ENCODE measurements at regions of chr12 and their contacts with region 1.

Region 1: GRCh38 chr12:810671-811415 is 58.5 kb downstream of the WNK1 start:
- DNase-seq: no peak
- H3K4me3 ChIP-seq: peak overlapping the region in 1 of 2 donors; percentile 9
- H3K4me3 Mint-ChIP-seq: peak overlapping the region in 7 of 8 donors; percentile 21 to 76 (median 62)
- H3K27ac ChIP-seq: peak overlapping the region; percentile 11
- H3K27ac Mint-ChIP-seq: peak overlapping the region; percentile 14 to 86 (median 78)
- H3K4me1 ChIP-seq: peaks cover 86% of the 10 kb centered on the region
- H3K4me1 Mint-ChIP-seq: peaks cover 50 to 81% (median 66%) of the 10 kb centered on the region in 4 donors
- H3K27me3 ChIP-seq: no peaks in the 10 kb centered on the region
- H3K27me3 Mint-ChIP-seq: no peaks in the 10 kb centered on the region

Region 2: DNA sequence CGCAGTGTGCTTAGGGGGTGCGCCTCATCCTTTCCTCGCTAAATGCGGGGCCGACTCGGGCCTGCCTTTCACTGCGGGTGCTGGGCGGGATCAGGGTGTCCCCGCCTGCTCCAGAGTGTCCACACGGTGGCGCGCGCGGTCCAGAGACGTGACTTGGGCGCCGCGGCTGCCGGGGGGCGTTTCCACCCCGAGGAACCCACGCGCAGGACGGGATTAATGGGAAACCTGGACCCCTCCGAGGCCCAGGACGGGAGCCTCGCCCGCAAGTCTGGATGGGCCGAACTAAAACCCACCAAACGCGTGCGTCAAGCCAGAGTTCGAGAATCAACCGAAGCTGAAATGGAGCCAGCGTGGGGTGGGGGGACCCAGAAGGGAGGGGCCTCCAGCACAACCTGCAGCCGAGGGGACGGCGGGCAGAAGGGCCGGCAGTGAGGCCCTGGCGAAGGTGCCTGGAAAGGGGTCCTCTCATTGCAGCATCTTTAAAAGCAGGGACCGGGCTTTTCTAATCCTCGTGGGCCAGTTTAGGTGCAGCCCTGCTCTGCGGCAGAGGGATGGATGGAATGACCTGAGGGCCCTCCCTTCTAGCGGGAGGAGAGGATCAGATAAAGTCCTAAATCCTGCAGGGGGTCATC is 240.9 kb before region 1 on chr12:
- CTCF ChIA-PET with region 1: interaction called, 219 read pairs
- POLR2A ChIA-PET with region 1: interaction called, 13 read pairs
- intact Hi-C with region 1: loop called (anchors 2 kb)
- DNase-seq: peak; percentile 79 to 84 (median 82)
- H3K4me3 ChIP-seq: peak overlapping the region; percentile 52 to 65
- H3K4me3 Mint-ChIP-seq: peak overlapping the region; percentile 78 to 90 (median 86)
- H3K27ac ChIP-seq: peak overlapping the region; percentile 47
- H3K27ac Mint-ChIP-seq: peak overlapping the region in 6 of 7 donors; percentile 64 to 88 (median 80)
- H3K4me1 ChIP-seq: peaks cover 43% of the 10 kb centered on the region
- H3K4me1 Mint-ChIP-seq: peaks cover 35 to 54% (median 42%) of the 10 kb centered on the region in 4 donors
- H3K27me3 ChIP-seq: no peaks in the 10 kb centered on the region
- H3K27me3 Mint-ChIP-seq: no peaks in the 10 kb centered on the region

Region 3: DNA sequence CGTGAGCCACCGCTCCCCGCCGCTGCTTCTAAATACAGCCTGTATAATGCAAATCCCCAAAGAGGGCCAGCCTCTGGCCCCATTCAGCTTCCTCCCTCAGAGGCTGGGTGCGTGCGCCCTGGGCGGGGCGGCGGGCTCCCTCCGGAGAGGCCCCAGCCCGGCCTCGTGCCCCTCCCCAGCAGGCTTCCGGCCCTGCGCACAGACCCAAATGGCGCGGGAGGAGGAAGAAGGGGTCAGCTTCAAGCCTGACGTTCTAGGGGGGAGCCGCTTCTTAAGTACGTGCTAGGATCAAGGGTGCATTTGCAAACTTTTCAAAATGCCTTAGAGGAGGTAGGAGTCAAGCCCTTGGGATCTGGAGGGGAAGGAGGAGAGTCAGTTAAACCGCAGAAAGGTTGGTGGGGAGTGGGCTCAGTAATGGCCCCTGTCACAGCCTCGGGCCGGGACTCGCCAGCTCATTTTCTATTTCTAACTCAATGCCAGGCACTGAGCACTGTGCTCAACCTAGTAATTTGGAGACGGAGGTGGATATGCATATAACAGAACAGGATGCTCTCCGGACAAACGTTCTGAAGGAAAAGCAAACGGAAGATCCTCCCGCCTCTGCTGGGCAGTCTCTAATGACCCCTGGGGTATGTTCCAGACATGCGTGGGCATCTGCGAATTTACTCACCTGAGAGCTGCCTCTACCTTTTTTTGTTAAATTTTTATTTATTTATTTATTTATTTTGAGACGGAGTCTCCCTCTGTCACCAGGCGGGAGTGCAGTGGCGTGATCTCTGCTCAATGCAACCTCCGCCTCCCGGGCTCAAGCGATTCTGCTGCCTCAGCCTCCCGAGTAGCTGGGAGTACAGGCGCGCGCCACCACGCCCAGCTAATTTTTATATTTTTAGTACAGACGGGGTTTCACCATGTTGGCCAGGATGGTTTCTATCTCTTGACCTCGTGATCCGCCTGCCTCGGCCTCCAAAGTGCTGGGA is 179.9 kb before region 1 on chr12:
- CTCF ChIA-PET with region 1: interaction called, 14 read pairs
- POLR2A ChIA-PET with region 1: interaction called, 4 read pairs
- intact Hi-C with region 1: no loop called
- DNase-seq: peak in 3 of 5 donors; percentile 66 to 81 (median 68)
- H3K4me3 ChIP-seq: peak overlapping the region in 1 of 2 donors; percentile 68
- H3K4me3 Mint-ChIP-seq: peak overlapping the region in 6 of 8 donors; percentile 92 to 98 (median 93)
- H3K27ac ChIP-seq: peak overlapping the region; percentile 76
- H3K27ac Mint-ChIP-seq: peak overlapping the region in 5 of 7 donors; percentile 86 to 99 (median 95)
- H3K4me1 ChIP-seq: peaks cover 15% of the 10 kb centered on the region
- H3K4me1 Mint-ChIP-seq: peaks cover 4 to 28% (median 18%) of the 10 kb centered on the region in 4 donors
- H3K27me3 ChIP-seq: no peaks in the 10 kb centered on the region
- H3K27me3 Mint-ChIP-seq: no peaks in the 10 kb centered on the region

Region 4: GRCh38 chr12:662566-663292 is 148.1 kb before region 1 on chr12:
- CTCF ChIA-PET with region 1: interaction called, 14 read pairs
- POLR2A ChIA-PET with region 1: interaction called, 3 read pairs
- intact Hi-C with region 1: no loop called
- DNase-seq: no peak
- H3K4me3 ChIP-seq: peak overlapping the region in 1 of 2 donors; percentile 16
- H3K4me3 Mint-ChIP-seq: peak overlapping the region; percentile 80 to 93 (median 86)
- H3K27ac ChIP-seq: peak overlapping the region; percentile 49
- H3K27ac Mint-ChIP-seq: peak overlapping the region; percentile 14 to 95 (median 90)
- H3K4me1 ChIP-seq: peaks cover 50% of the 10 kb centered on the region
- H3K4me1 Mint-ChIP-seq: peaks cover 29 to 58% (median 48%) of the 10 kb centered on the region in 4 donors
- H3K27me3 ChIP-seq: no peaks in the 10 kb centered on the region
- H3K27me3 Mint-ChIP-seq: no peaks in the 10 kb centered on the region

Region 5: DNA sequence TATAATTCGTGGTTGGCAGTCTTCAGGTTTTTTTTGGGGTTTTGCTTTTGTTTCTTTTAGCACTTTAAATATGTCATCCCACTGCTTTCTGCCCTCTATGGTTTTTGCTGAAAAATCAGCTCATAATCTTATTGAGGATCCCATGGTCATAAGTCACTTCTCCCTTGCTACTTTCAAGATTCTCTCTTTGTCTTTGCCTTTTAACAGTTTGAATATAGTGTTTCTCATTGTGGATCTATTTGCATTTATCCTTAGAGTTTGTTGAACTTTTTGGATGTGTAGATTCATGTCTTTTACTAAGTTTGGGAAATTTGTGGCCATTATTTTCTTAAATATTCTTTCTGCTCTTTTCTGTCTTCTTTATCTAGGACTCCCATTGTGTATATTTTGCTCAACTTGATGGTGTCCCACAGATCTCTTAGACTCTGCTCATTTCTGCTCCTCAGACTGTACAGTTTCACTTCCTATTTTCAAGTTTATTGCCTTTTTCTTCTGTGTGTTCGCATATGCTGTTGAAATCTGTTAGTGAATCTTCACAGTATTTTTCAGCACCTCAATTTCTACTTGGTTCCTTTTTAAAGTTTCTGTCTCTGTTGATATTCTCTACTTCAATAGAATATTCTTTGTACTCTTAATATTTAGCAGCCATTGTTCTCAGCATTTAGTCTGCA is 12.3 kb after region 1 on chr12:
- CTCF ChIA-PET with region 1: interaction called, 12 read pairs
- POLR2A ChIA-PET with region 1: no interaction called
- intact Hi-C with region 1: no loop called
- DNase-seq: no peak
- H3K4me3 ChIP-seq: no peak overlapping the region
- H3K4me3 Mint-ChIP-seq: peak overlapping the region in 3 of 8 donors; percentile 6 to 65 (median 64)
- H3K27ac ChIP-seq: no peak overlapping the region
- H3K27ac Mint-ChIP-seq: peak overlapping the region in 4 of 7 donors; percentile 8 to 62 (median 44)
- H3K4me1 ChIP-seq: peaks cover 64% of the 10 kb centered on the region
- H3K4me1 Mint-ChIP-seq: peaks cover 31 to 65% (median 48%) of the 10 kb centered on the region in 4 donors
- H3K27me3 ChIP-seq: no peaks in the 10 kb centered on the region
- H3K27me3 Mint-ChIP-seq: no peaks in the 10 kb centered on the region

Region 6: DNA sequence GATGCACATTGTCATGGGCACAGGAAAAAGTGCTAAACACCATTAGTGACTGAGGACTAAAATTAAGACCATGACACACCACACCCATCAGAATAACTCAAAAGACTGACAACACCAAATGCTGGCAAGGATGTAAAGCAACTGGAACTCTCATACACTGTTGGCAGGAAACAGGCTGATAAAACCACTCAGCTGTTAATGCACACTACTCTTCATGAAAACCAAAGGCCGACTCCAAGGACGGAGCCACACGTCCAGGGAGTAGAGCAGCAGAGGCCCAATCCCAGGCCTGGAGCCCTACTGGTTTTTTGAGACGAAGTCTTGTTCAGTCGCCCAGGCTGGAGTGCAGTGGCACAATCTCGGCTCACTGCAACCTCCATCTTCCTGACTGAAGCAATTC is 132.2 kb after region 1 on chr12:
- CTCF ChIA-PET with region 1: no interaction called
- POLR2A ChIA-PET with region 1: no interaction called
- intact Hi-C with region 1: no loop called
- DNase-seq: no peak
- H3K4me3 ChIP-seq: no peak overlapping the region
- H3K4me3 Mint-ChIP-seq: no peak overlapping the region
- H3K27ac ChIP-seq: no peak overlapping the region
- H3K27ac Mint-ChIP-seq: peak overlapping the region in 3 of 7 donors; percentile 3 to 53 (median 8)
- H3K4me1 ChIP-seq: peaks cover 14% of the 10 kb centered on the region
- H3K4me1 Mint-ChIP-seq: peaks cover 24 to 57% (median 32%) of the 10 kb centered on the region in 4 donors
- H3K27me3 ChIP-seq: no peaks in the 10 kb centered on the region
- H3K27me3 Mint-ChIP-seq: no peaks in the 10 kb centered on the region

Region 7: DNA sequence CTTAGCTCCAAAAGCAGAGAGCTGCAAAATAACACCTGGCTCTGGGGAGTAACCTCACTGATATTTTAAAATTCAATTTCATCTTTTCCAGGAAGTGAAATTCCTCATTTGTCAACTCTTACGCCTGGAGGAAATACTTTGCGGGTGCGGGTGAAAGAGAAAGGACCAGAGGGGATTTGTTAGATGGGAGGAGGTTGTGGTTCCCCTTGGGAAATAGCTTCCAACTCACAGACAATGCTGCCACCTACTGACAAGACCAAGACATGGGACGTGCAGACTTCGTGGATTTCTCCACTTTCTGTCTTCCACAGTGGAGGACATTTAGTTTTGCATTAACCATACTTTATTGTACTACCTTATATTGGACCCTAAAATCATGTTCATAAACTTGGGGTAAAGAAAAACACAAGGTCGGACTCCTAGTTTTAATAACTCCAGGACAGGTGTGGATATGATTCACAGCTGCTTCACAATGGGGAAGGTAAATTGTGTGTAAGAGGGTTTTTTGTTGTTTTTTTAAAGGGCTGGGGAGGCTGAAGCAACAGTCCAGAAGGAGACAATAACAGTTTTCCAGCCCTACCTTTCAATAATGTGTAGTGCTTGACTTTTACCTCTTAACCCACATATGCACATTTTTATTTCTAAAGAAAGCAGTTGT is 772.7 kb after region 1 on chr12:
- CTCF ChIA-PET with region 1: interaction called, 11 read pairs
- POLR2A ChIA-PET with region 1: no interaction called
- intact Hi-C with region 1: loop called (anchors 5 kb)
- DNase-seq: peak; percentile 60 to 68 (median 67)
- H3K4me3 ChIP-seq: no peak overlapping the region
- H3K4me3 Mint-ChIP-seq: peak overlapping the region in 2 of 8 donors; percentile 45 to 51
- H3K27ac ChIP-seq: no peak overlapping the region
- H3K27ac Mint-ChIP-seq: peak overlapping the region in 5 of 7 donors; percentile 35 to 81 (median 72)
- H3K4me1 ChIP-seq: peaks cover 21% of the 10 kb centered on the region
- H3K4me1 Mint-ChIP-seq: peaks cover 14 to 22% (median 19%) of the 10 kb centered on the region in 4 donors
- H3K27me3 ChIP-seq: no peaks in the 10 kb centered on the region
- H3K27me3 Mint-ChIP-seq: no peaks in the 10 kb centered on the region